PC-9 (cell line): ENCODE measurements at regions of chr19 and their contacts with region 1.

Region 1: GRCh38 chr19:15828429-15829305 is 13.2 kb upstream of the OR10H1 start:
- DNase-seq: peak; percentile 82 to 99
- H3K4me3 ChIP-seq: peak overlapping the region; percentile 64
- H3K27ac ChIP-seq: peak overlapping the region; percentile 99
- H3K4me1 ChIP-seq: peaks cover 46% of the 10 kb centered on the region
- H3K27me3 ChIP-seq: no peaks in the 10 kb centered on the region
- CTCF ChIP-seq: no peak

Region 2: GRCh38 chr19:15672580-15673175 is 156.0 kb before region 1 on chr19 and contains the start of gene CYP4F12:
- CTCF ChIA-PET with region 1: no interaction called
- POLR2A ChIA-PET with region 1: no interaction called
- intact Hi-C with region 1: loop called (anchors 5 kb)
- DNase-seq: peak; percentile 82 to 92
- H3K4me3 ChIP-seq: peak within 1 kb of the TSS; percentile 13; the same call in 1 of the 2 replicates
- H3K27ac ChIP-seq: peak within 1 kb of the TSS; percentile 63
- H3K4me1 ChIP-seq: peaks cover 14% of the 10 kb centered on the region
- H3K27me3 ChIP-seq: no peaks in the 10 kb centered on the region
- CTCF ChIP-seq: no peak
- total RNA-seq, gene CYP4F12: 5.7 and 8.1 TPM in 2 replicates

Region 3: GRCh38 chr19:15810335-15810734 is 18.3 kb before region 1 on chr19:
- CTCF ChIA-PET with region 1: interaction called, 3 read pairs
- POLR2A ChIA-PET with region 1: interaction called, 6 read pairs
- intact Hi-C with region 1: loop called (anchors 1 kb)
- DNase-seq: peak; percentile 37 to 63
- H3K4me3 ChIP-seq: no peak overlapping the region
- H3K27ac ChIP-seq: no peak overlapping the region
- H3K4me1 ChIP-seq: peaks cover 6% of the 10 kb centered on the region; the same call in 1 of the 2 replicates
- H3K27me3 ChIP-seq: no peaks in the 10 kb centered on the region
- CTCF ChIP-seq: peak; percentile 63

Region 4: DNA sequence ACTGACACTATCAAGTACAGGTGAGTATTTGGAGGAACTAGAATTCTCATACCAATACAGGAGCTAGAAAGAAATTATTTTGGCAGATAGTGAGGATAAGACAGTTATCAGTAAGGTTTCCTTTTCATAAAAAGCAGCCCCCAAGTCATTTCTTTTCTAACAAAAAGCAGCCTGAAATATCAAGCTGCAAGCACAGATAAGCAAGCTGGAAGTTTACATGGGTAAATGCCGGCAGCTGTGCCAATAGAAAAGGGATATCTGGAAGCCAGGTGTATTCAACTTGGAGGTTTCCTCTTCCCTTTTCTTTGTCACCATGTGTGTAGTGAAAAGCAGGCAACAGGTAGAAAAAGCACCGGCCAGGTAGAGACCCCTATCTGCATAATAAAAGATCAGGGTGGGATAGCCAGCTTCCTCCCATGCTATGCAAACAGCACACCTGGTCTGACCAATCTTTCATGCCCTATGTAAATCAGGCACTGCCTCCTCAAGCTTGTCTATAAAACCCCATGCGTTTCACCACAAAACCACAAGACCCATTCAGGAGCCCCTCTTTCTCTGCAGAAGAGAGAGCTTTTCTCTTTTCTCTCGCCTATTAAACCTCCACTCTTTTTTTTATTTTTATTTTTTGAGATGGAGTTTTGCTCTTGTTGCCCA is 46.3 kb after region 1 on chr19:
- CTCF ChIA-PET with region 1: no interaction called
- POLR2A ChIA-PET with region 1: no interaction called
- intact Hi-C with region 1: no loop called
- DNase-seq: no peak
- H3K4me3 ChIP-seq: no peak overlapping the region
- H3K27ac ChIP-seq: no peak overlapping the region
- H3K4me1 ChIP-seq: peaks cover 10% of the 10 kb centered on the region
- H3K27me3 ChIP-seq: 0 out of 2 replicates have a peak, but pooled peaks cover 3% of the 10 kb centered on the region
- CTCF ChIP-seq: no peak

Region 5: DNA sequence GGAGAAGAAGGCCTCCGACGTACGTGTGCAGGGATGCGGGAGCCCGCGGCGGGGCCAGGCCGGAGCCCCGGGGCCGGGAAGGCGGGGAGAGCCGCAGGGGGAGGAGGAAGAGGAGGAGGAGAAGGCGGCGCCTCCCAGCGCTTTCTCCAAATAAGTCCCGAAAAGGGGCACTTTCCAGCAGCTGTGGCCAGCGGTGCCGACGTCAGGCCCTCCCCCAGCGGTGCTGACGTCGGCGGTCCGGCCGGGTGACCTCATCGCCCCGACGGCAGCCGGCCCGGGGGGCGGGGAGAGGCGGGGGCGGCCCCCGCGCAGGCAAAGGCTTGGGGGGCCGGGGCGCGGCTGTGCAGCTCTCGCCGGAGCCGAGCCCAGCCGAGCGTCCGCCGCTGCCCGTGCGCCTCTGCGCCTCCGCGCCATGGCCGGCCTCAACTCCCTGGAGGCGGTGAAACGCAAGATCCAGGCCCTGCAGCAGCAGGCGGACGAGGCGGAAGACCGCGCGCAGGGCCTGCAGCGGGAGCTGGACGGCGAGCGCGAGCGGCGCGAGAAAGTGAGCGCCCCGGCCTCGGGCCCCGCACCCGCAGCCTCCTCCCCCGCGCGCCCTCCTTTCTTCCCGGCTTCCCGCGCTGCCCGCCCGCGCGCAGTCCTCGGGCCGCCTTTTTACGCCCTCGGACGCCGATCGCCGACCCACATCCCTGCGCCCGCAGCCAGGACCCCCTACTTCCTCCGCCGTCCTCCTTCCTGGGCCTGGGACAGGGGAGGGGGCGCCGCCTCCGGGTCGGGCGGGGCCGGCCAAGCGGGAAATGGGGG is 247.7 kb after region 1 on chr19 and contains the start of gene TPM4:
- CTCF ChIA-PET with region 1: no interaction called
- POLR2A ChIA-PET with region 1: interaction called, 4 read pairs
- intact Hi-C with region 1: loop called (anchors 1 kb)
- DNase-seq: peak; percentile 77 to 92
- H3K4me3 ChIP-seq: peak within 1 kb of the TSS; percentile 70
- H3K27ac ChIP-seq: peak within 1 kb of the TSS; percentile 99
- H3K4me1 ChIP-seq: peaks cover 43% of the 10 kb centered on the region
- H3K27me3 ChIP-seq: no peaks in the 10 kb centered on the region
- CTCF ChIP-seq: no peak
- total RNA-seq, gene TPM4: 279 and 307 TPM in 2 replicates

Region 6: GRCh38 chr19:16371540-16371986 is 542.9 kb after region 1 on chr19:
- CTCF ChIA-PET with region 1: no interaction called
- POLR2A ChIA-PET with region 1: no interaction called
- intact Hi-C with region 1: no loop called
- DNase-seq: no peak
- H3K4me3 ChIP-seq: no peak overlapping the region
- H3K27ac ChIP-seq: no peak overlapping the region
- H3K4me1 ChIP-seq: no peaks in the 10 kb centered on the region
- H3K27me3 ChIP-seq: no peaks in the 10 kb centered on the region
- CTCF ChIP-seq: no peak